ENCODE measurements at regions of chr11 and their contacts with region 1.

Region 1: GRCh38 chr11:304915-305843 is 2.4 kb upstream of the IFITM2 start:
- DNase-seq: peak in 6 of 9 experiments; percentile 55 to 84 (median 72)
- ATAC-seq: peak; percentile 30
- H3K4me3 ChIP-seq: no peak overlapping the region
- H3K4me3 Mint-ChIP-seq: peak overlapping the region; percentile 5
- H3K27ac ChIP-seq: peak overlapping the region in 1 of 2 experiments; percentile 40
- H3K27ac Mint-ChIP-seq: peak overlapping the region; percentile 43
- H3K4me1 ChIP-seq: peaks cover 59% of the 10 kb centered on the region
- H3K4me1 Mint-ChIP-seq: peaks cover 58% of the 10 kb centered on the region
- H3K27me3 ChIP-seq: no peaks in the 10 kb centered on the region
- H3K27me3 Mint-ChIP-seq: no peaks in the 10 kb centered on the region
- CTCF ChIP-seq: peak; percentile 75

Region 2: DNA sequence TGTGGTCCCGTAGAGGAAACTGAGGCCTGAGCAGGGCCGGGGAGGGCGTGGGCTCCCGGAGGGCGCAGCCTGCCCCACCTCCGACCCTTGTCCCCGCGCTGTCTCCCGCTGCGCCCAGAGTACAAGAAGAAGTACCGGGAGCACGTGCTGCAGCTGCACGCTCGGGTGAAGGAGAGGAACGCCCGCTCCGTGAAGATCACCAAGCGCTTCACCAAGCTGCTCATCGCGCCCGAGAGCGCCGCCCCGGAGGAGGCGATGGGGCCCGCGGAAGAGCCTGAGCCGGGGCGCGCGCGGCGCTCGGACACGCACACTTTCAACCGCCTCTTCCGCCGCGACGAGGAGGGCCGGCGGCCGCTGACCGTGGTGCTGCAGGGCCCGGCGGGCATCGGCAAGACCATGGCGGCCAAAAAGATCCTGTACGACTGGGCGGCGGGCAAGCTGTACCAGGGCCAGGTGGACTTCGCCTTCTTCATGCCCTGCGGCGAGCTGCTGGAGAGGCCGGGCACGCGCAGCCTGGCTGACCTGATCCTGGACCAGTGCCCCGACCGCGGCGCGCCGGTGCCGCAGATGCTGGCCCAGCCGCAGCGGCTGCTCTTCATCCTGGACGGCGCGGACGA is 25.1 kb before region 1 on chr11:
- CTCF ChIA-PET with region 1: interaction called, 36 read pairs
- POLR2A ChIA-PET with region 1: interaction called, 10 read pairs
- intact Hi-C with region 1: no loop called
- DNase-seq: peak in 6 of 9 experiments; percentile 60 to 77 (median 67)
- ATAC-seq: peak; percentile 62
- H3K4me3 ChIP-seq: peak overlapping the region; percentile 56 to 70
- H3K4me3 Mint-ChIP-seq: peak overlapping the region; percentile 89
- H3K27ac ChIP-seq: peak overlapping the region in 1 of 2 experiments; percentile 57
- H3K27ac Mint-ChIP-seq: peak overlapping the region; percentile 89
- H3K4me1 ChIP-seq: peaks cover 49% of the 10 kb centered on the region
- H3K4me1 Mint-ChIP-seq: peaks cover 55% of the 10 kb centered on the region
- H3K27me3 ChIP-seq: peaks cover 0 to 11% of the 10 kb centered on the region in 2 experiments
- H3K27me3 Mint-ChIP-seq: no peaks in the 10 kb centered on the region
- CTCF ChIP-seq: no peak

Region 3: DNA sequence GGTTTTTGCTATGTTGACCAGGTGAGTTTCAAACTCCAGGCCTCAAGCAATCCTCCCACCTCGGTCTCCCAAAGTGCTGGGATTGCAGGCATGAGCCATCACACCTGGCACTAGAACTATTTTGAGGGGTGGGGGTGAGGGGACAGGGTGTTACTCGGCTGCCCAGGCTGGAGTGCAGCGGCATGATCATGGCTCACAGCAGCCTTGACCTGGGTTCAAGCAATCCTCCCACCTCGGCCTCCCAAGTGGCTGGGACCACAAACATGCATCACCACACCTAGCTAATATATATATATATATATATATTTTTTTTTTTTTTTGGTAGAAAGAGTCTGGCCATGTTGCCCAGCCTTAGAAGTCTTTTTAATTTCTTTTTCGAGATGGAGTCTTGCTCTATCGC is 32.5 kb after region 1 on chr11:
- CTCF ChIA-PET with region 1: interaction called, 16 read pairs
- POLR2A ChIA-PET with region 1: no interaction called
- intact Hi-C with region 1: no loop called
- DNase-seq: no peak
- ATAC-seq: no peak
- H3K4me3 ChIP-seq: no peak overlapping the region
- H3K4me3 Mint-ChIP-seq: no peak overlapping the region
- H3K27ac ChIP-seq: no peak overlapping the region
- H3K27ac Mint-ChIP-seq: no peak overlapping the region
- H3K4me1 ChIP-seq: peaks cover 39% of the 10 kb centered on the region
- H3K4me1 Mint-ChIP-seq: peaks cover 36% of the 10 kb centered on the region
- H3K27me3 ChIP-seq: no peaks in the 10 kb centered on the region
- H3K27me3 Mint-ChIP-seq: no peaks in the 10 kb centered on the region
- CTCF ChIP-seq: no peak

Region 4: GRCh38 chr11:363948-364761 is 59.0 kb after region 1 on chr11:
- CTCF ChIA-PET with region 1: interaction called, 102 read pairs
- POLR2A ChIA-PET with region 1: interaction called, 4 read pairs
- intact Hi-C with region 1: loop called in 1 of 2 experiments (anchors 2 kb)
- DNase-seq: peak; percentile 45 to 83 (median 67)
- ATAC-seq: peak; percentile 86
- H3K4me3 ChIP-seq: no peak overlapping the region
- H3K4me3 Mint-ChIP-seq: no peak overlapping the region
- H3K27ac ChIP-seq: peak overlapping the region in 1 of 2 experiments; percentile 21
- H3K27ac Mint-ChIP-seq: no peak overlapping the region
- H3K4me1 ChIP-seq: peaks cover 11% of the 10 kb centered on the region
- H3K4me1 Mint-ChIP-seq: peaks cover 21% of the 10 kb centered on the region
- H3K27me3 ChIP-seq: peaks cover 11 to 17% of the 10 kb centered on the region in 2 experiments
- H3K27me3 Mint-ChIP-seq: peaks cover 27% of the 10 kb centered on the region
- CTCF ChIP-seq: peak; percentile 49

Region 5: DNA sequence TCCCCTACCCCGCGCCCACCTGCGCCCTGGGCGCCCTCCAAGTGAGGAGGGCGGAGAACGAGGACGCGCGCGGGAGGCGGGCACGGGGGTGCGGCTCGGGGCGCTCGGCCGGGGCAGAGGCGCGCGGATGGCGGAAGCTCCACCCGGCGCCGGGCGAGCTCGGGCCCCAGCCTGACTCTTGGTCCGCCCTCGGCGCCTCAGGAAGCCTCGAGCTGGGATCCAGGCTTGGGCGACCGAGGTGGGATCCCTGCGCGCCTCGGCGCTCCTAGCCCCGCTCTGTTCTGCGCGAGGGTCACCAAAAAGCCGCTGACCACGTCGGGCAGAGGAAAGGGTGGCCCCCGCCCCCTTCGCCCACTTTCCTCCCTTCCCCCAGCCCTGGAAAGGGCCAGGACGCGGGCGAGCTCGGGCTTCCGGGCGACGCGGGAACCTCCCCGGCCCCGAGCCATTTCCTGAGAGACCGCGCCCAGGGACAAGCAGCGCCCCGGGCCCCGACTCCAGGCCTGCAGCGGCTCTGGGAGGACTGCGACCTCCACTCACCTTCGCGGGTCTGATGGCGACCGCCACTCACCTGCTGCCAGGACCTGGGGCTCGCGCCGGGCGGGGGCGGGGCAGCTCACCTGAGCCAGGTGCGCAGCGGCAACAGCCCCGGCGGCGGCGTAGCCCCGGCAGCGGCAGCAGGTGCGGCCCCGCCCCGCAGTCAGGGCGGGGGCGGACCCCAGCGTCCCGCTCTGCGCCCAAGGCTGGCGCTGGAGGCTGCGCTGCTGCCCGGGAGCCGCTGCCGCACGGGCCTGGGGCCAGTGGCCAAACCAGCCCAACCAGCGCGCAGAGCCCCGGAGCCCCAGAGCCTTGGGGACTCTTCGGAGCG is 111.8 kb after region 1 on chr11:
- CTCF ChIA-PET with region 1: no interaction called
- POLR2A ChIA-PET with region 1: no interaction called
- intact Hi-C with region 1: no loop called
- DNase-seq: peak in 7 of 9 experiments; percentile 39 to 77 (median 55)
- ATAC-seq: peak; percentile 11
- H3K4me3 ChIP-seq: peak overlapping the region; percentile 82 to 96
- H3K4me3 Mint-ChIP-seq: peak overlapping the region; percentile 96
- H3K27ac ChIP-seq: peak overlapping the region; percentile 69 to 75
- H3K27ac Mint-ChIP-seq: no peak overlapping the region
- H3K4me1 ChIP-seq: peaks cover 27% of the 10 kb centered on the region
- H3K4me1 Mint-ChIP-seq: peaks cover 27% of the 10 kb centered on the region
- H3K27me3 ChIP-seq: no peaks in the 10 kb centered on the region
- H3K27me3 Mint-ChIP-seq: no peaks in the 10 kb centered on the region
- CTCF ChIP-seq: no peak

Region 6: GRCh38 chr11:488999-489398 is 183.8 kb after region 1 on chr11:
- CTCF ChIA-PET with region 1: no interaction called
- POLR2A ChIA-PET with region 1: no interaction called
- intact Hi-C with region 1: no loop called
- DNase-seq: no peak
- ATAC-seq: no peak
- H3K4me3 ChIP-seq: no peak overlapping the region
- H3K4me3 Mint-ChIP-seq: no peak overlapping the region
- H3K27ac ChIP-seq: no peak overlapping the region
- H3K27ac Mint-ChIP-seq: no peak overlapping the region
- H3K4me1 ChIP-seq: no peaks in the 10 kb centered on the region
- H3K4me1 Mint-ChIP-seq: no peaks in the 10 kb centered on the region
- H3K27me3 ChIP-seq: no peaks in the 10 kb centered on the region
- H3K27me3 Mint-ChIP-seq: no peaks in the 10 kb centered on the region
- CTCF ChIP-seq: no peak

Region 7: DNA sequence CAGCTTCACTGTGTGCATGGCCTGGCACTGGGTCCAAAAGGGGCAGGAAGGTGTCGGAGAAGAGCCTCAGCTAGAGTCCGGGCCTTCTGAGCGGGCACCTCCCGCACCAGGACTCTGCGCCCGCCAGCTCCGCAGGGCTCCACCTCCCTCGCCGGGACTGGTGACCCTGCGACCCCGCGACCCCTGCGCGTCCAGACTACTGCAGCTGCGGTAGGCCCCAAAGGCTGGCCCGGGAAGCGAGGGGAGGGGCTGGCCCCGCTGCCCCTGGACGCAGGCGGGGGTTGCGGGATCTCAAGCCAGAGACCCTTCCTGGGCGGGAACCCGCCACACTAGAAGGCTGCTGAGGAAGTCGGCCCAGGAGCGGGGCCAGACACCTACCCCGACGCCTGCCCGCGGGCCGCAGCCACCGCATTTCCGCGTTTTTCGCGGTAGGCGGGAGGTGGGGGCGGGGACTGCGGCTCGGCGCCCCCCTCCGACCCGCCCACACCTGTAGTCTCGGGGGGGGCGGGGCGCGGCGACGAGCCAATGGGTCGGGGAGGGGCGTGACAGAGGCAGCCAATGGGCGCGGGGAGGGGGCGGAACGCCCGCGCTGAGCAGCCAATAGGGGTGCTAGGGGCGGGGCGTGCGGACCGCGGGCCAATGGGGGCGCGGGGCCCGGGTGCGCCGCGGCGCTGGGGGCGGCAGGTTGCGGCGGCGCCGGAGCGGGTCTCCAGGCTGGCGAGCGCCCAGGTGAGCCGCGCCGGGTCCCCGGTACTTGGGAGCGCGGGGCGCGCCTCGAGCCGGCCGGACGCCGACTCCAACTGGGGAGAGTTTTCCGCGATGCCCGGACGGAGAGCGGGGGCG is 255.3 kb after region 1 on chr11 and contains the starts of genes LMNTD2 and RASSF7:
- CTCF ChIA-PET with region 1: no interaction called
- POLR2A ChIA-PET with region 1: no interaction called
- intact Hi-C with region 1: no loop called
- DNase-seq: peak; percentile 92 to 98 (median 95)
- ATAC-seq: peak; percentile 94
- H3K4me3 ChIP-seq: peak within 1 kb of the TSS; percentile 51 to 94
- H3K4me3 Mint-ChIP-seq: peak within 1 kb of the TSS; percentile 88
- H3K27ac ChIP-seq: peak within 1 kb of the TSS; percentile 51 to 76
- H3K27ac Mint-ChIP-seq: peak within 1 kb of the TSS; percentile 84
- H3K4me1 ChIP-seq: peaks cover 19% of the 10 kb centered on the region
- H3K4me1 Mint-ChIP-seq: peaks cover 18% of the 10 kb centered on the region
- H3K27me3 ChIP-seq: no peaks in the 10 kb centered on the region
- H3K27me3 Mint-ChIP-seq: no peaks in the 10 kb centered on the region
- CTCF ChIP-seq: no peak
- total RNA-seq, gene LMNTD2: 4.2 to 5.6 TPM
- total RNA-seq, gene RASSF7: 11.8 to 15.3 TPM